ENCODE measurements at regions of chr12 and their contacts with region 1.

Region 1: GRCh38 chr12:79407671-79408622 is 282.8 kb downstream of the PAWR start:
- DNase-seq: peak; percentile 67 to 70
- H3K4me3 ChIP-seq: no peak overlapping the region
- H3K27ac ChIP-seq: no peak overlapping the region
- H3K4me1 ChIP-seq: peaks cover 7% of the 10 kb centered on the region
- H3K27me3 ChIP-seq: no peaks in the 10 kb centered on the region
- CTCF ChIP-seq: peak; percentile 86

Region 2: GRCh38 chr12:79373896-79374499 is 33.9 kb before region 1 on chr12:
- CTCF ChIA-PET with region 1: no interaction called
- POLR2A ChIA-PET with region 1: no interaction called
- intact Hi-C with region 1: no loop called
- DNase-seq: peak in 1 of 2 experiments; percentile 33
- H3K4me3 ChIP-seq: no peak overlapping the region
- H3K27ac ChIP-seq: no peak overlapping the region
- H3K4me1 ChIP-seq: no peaks in the 10 kb centered on the region
- H3K27me3 ChIP-seq: no peaks in the 10 kb centered on the region
- CTCF ChIP-seq: peak; percentile 85

Region 3: DNA sequence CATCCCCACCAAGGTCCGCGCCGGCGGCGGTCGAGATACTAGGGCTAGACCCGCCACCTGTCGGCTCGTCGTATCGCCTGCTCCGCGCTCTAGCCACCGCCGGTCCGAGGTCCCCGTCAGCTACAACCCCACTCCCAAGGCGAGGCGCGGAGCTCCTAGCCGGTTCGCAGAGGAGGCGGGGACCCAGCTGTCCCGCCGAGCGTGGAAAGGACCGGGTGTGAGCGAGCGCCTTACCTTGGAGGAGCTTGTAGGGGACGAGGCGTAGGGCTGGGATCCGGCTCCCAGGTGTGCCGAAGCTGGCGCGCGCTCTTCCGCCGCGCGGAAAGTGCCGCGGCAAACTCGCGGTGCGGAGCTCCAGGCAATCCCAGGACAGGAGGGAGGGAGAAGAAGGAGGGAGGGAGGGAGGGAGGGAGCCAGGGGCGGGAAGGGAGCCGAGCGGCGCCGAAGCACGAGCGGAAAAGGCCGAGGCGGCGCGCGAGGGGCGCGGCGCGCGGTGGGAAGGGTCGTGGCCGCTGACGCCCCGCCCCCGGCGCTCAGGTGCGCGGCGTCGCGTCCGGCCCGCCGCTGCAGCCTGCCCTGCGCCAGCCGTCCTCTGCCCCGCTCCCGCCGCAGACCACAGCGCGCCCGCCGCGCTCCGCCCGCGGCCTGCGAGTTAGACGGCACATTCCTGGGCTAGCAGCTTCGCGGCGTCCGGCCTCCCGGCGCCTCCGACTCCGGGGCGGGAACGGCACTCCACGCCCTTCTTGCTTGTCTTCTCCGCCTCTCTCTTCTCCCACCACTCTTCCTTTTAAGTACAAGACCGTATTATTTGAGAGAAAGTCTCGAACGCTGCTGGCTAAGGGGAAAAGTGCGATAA is 282.9 kb after region 1 on chr12 and contains the start of gene PAWR:
- CTCF ChIA-PET with region 1: no interaction called
- POLR2A ChIA-PET with region 1: no interaction called
- intact Hi-C with region 1: loop called (anchors 5 kb)
- DNase-seq: peak; percentile 71 to 89
- H3K4me3 ChIP-seq: peak within 1 kb of the TSS; percentile 82
- H3K27ac ChIP-seq: peak within 1 kb of the TSS; percentile 99
- H3K4me1 ChIP-seq: peaks cover 38% of the 10 kb centered on the region
- H3K27me3 ChIP-seq: no peaks in the 10 kb centered on the region
- CTCF ChIP-seq: no peak; the same call in 1 of the 2 replicates
- total RNA-seq, gene PAWR: 204 and 361 TPM in 2 replicates

Region 4: GRCh38 chr12:79737875-79738718 is 330.1 kb after region 1 on chr12:
- CTCF ChIA-PET with region 1: interaction called, 8 read pairs
- POLR2A ChIA-PET with region 1: no interaction called
- intact Hi-C with region 1: loop called (anchors 1 kb)
- DNase-seq: peak; percentile 22 to 63
- H3K4me3 ChIP-seq: no peak overlapping the region
- H3K27ac ChIP-seq: no peak overlapping the region
- H3K4me1 ChIP-seq: peaks cover 12% of the 10 kb centered on the region; the same call in 1 of the 2 replicates
- H3K27me3 ChIP-seq: no peaks in the 10 kb centered on the region
- CTCF ChIP-seq: peak; percentile 81

Region 5: GRCh38 chr12:80186727-80187217 is 778.8 kb after region 1 on chr12:
- CTCF ChIA-PET with region 1: no interaction called
- POLR2A ChIA-PET with region 1: no interaction called
- intact Hi-C with region 1: loop called (anchors 1 kb)
- DNase-seq: peak; percentile 28 to 64
- H3K4me3 ChIP-seq: no peak overlapping the region
- H3K27ac ChIP-seq: no peak overlapping the region
- H3K4me1 ChIP-seq: peaks cover 4% of the 10 kb centered on the region; the same call in 1 of the 2 replicates
- H3K27me3 ChIP-seq: no peaks in the 10 kb centered on the region
- CTCF ChIP-seq: peak; percentile 81

Region 6: GRCh38 chr12:80269803-80270552 is 862.0 kb after region 1 on chr12:
- CTCF ChIA-PET with region 1: no interaction called
- POLR2A ChIA-PET with region 1: no interaction called
- intact Hi-C with region 1: loop called (anchors 1 kb)
- DNase-seq: no peak
- H3K4me3 ChIP-seq: no peak overlapping the region
- H3K27ac ChIP-seq: no peak overlapping the region
- H3K4me1 ChIP-seq: peaks cover 20% of the 10 kb centered on the region
- H3K27me3 ChIP-seq: no peaks in the 10 kb centered on the region
- CTCF ChIP-seq: peak; percentile 84

Region 7: GRCh38 chr12:80472902-80473500 is 1065.1 kb after region 1 on chr12:
- CTCF ChIA-PET with region 1: no interaction called
- POLR2A ChIA-PET with region 1: no interaction called
- intact Hi-C with region 1: loop called (anchors 10 kb)
- DNase-seq: peak; percentile 3 to 47
- H3K4me3 ChIP-seq: no peak overlapping the region
- H3K27ac ChIP-seq: no peak overlapping the region
- H3K4me1 ChIP-seq: no peaks in the 10 kb centered on the region
- H3K27me3 ChIP-seq: no peaks in the 10 kb centered on the region
- CTCF ChIP-seq: peak; percentile 69

Region 8: GRCh38 chr12:81257947-81258551 is 1850.1 kb after region 1 on chr12:
- CTCF ChIA-PET with region 1: no interaction called
- POLR2A ChIA-PET with region 1: no interaction called
- intact Hi-C with region 1: loop called (anchors 1 kb)
- DNase-seq: peak in 1 of 2 experiments; percentile 40
- H3K4me3 ChIP-seq: no peak overlapping the region
- H3K27ac ChIP-seq: no peak overlapping the region
- H3K4me1 ChIP-seq: no peaks in the 10 kb centered on the region
- H3K27me3 ChIP-seq: no peaks in the 10 kb centered on the region
- CTCF ChIP-seq: peak; percentile 76